Motor neuron (in vitro differentiated cells): ENCODE measurements at regions of chr16 and their contacts with region 1.

Region 1: GRCh38 chr16:55465077-55465896 is 13.7 kb upstream of the MMP2 start:
- ATAC-seq: peak; percentile 95 to 99 (median 98)
- H3K4me3 ChIP-seq: no peak overlapping the region
- H3K27ac ChIP-seq: no peak overlapping the region
- H3K4me1 ChIP-seq: no peaks in the 10 kb centered on the region

Region 2: GRCh38 chr16:55543472-55543871 is 78.2 kb after region 1 on chr16:
- in situ Hi-C with region 1: loop called in 2 of 9 experiments (anchors 10 kb)
- ATAC-seq: peak in 3 of 8 experiments; percentile 44 to 48 (median 46)
- H3K4me3 ChIP-seq: no peak overlapping the region
- H3K27ac ChIP-seq: no peak overlapping the region
- H3K4me1 ChIP-seq: peaks cover 0 to 3% of the 10 kb centered on the region in 2 donors

Region 3: GRCh38 chr16:55567382-55567781 is 102.1 kb after region 1 on chr16:
- in situ Hi-C with region 1: loop called in 1 of 9 experiments (anchors 25 kb)
- ATAC-seq: peak in 1 of 8 experiments; percentile 75
- H3K4me3 ChIP-seq: no peak overlapping the region
- H3K27ac ChIP-seq: no peak overlapping the region
- H3K4me1 ChIP-seq: no peaks in the 10 kb centered on the region

Region 4: GRCh38 chr16:55678161-55678821 is 213.0 kb after region 1 on chr16:
- in situ Hi-C with region 1: loop called in 1 of 9 experiments (anchors 25 kb)
- ATAC-seq: peak in 2 of 8 experiments; percentile 35 to 46
- H3K4me3 ChIP-seq: no peak overlapping the region
- H3K27ac ChIP-seq: no peak overlapping the region
- H3K4me1 ChIP-seq: no peaks in the 10 kb centered on the region

Region 5: GRCh38 chr16:55701442-55702319 is 236.4 kb after region 1 on chr16:
- in situ Hi-C with region 1: loop called (anchors 5 to 25 kb)
- ATAC-seq: peak; percentile 43 to 92 (median 64)
- H3K4me3 ChIP-seq: no peak overlapping the region
- H3K27ac ChIP-seq: no peak overlapping the region
- H3K4me1 ChIP-seq: no peaks in the 10 kb centered on the region

Region 6: GRCh38 chr16:55706739-55707384 is 241.6 kb after region 1 on chr16:
- in situ Hi-C with region 1: loop called in 8 of 9 experiments (anchors 5 to 10 kb)
- ATAC-seq: no peak
- H3K4me3 ChIP-seq: no peak overlapping the region
- H3K27ac ChIP-seq: no peak overlapping the region
- H3K4me1 ChIP-seq: no peaks in the 10 kb centered on the region

Region 7: DNA sequence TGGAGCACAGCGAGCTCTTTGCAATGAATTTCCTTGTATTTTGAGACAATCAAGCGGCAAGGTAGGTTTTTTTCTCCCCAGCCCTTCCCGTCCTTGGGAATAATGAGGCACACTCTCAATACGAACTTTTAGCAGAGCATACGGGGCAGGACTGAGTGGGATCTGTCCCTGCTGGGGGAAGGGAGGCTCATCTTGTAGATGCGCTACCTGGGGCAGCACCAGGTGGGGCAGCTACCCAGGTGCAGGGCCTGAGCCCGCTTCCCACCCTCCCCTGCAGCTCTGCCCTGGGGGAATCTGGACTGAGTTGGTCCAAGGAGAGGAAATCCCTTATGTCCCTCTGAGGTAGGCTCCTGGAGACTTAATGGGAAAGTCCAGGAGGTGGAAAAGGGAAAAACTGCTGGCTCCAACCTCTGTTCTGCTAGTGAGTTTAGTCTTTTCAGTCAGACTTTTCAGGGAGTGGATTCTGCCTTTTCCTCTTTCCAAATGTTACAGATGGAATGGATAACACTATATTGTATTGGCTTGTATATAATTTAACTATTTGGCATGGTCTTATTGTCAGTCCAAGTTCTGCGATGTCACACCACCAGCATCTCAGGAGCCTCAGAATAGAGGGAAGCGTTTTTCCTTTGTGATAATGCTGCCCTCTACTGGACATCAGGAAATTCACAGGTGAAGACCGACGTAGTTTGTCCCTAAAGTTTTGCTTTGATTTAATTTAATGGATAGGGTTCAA is 377.2 kb after region 1 on chr16:
- in situ Hi-C with region 1: loop called in 8 of 9 experiments (anchors 10 to 25 kb)
- ATAC-seq: peak; percentile 46 to 70 (median 60)
- H3K4me3 ChIP-seq: no peak overlapping the region
- H3K27ac ChIP-seq: no peak overlapping the region
- H3K4me1 ChIP-seq: no peaks in the 10 kb centered on the region

Region 8: GRCh38 chr16:57045694-57046381 is 1580.6 kb after region 1 on chr16:
- in situ Hi-C with region 1: no loop called
- ATAC-seq: peak; percentile 87 to 99 (median 94)
- H3K4me3 ChIP-seq: no peak overlapping the region
- H3K27ac ChIP-seq: no peak overlapping the region
- H3K4me1 ChIP-seq: peaks cover 0 to 4% of the 10 kb centered on the region in 2 donors